ENCODE measurements at regions of chr5 and their contacts with region 1.

Region 1: GRCh38 chr5:53123702-53124101 is 14.1 kb upstream of the MOCS2 start:
- DNase-seq: peak; percentile 55
- ATAC-seq: no peak; the same call in 1 of the 2 replicates
- H3K4me3 ChIP-seq: no peak overlapping the region
- H3K27ac ChIP-seq: no peak overlapping the region
- H3K4me1 ChIP-seq: peaks cover 9% of the 10 kb centered on the region
- H3K27me3 ChIP-seq: no peaks in the 10 kb centered on the region
- CTCF ChIP-seq: peak; percentile 55

Region 2: GRCh38 chr5:52560366-52560765 is 563.3 kb before region 1 on chr5:
- CTCF ChIA-PET with region 1: no interaction called
- POLR2A ChIA-PET with region 1: no interaction called
- intact Hi-C with region 1: loop called (anchors 2 kb)
- DNase-seq: peak; percentile 56
- ATAC-seq: peak; percentile 76
- H3K4me3 ChIP-seq: no peak overlapping the region
- H3K27ac ChIP-seq: no peak overlapping the region
- H3K4me1 ChIP-seq: no peaks in the 10 kb centered on the region
- H3K27me3 ChIP-seq: peaks cover 42% of the 10 kb centered on the region
- CTCF ChIP-seq: peak; percentile 51

Region 3: DNA sequence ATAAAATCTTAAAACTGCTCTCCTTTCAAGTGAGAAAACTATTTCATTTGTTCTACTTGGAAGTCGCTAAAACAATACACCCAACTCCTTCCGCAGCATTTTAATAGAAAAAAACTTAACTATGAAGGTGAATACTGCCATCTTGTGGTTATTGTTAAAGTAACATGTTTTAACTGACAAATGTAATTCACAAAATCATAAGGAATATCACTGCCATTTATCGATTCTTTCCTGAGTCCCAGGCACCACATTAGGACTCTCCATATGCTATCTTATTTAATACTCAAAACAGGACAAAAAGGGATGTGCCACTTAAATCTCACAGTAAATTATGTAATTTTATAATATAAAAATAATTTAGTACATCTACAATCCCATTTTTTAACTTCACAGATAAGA is 466.5 kb before region 1 on chr5:
- CTCF ChIA-PET with region 1: no interaction called
- POLR2A ChIA-PET with region 1: no interaction called
- intact Hi-C with region 1: loop called (anchors 5 kb)
- DNase-seq: peak; percentile 63
- ATAC-seq: peak; percentile 35
- H3K4me3 ChIP-seq: no peak overlapping the region
- H3K27ac ChIP-seq: no peak overlapping the region
- H3K4me1 ChIP-seq: no peaks in the 10 kb centered on the region
- H3K27me3 ChIP-seq: peaks cover 40% of the 10 kb centered on the region
- CTCF ChIP-seq: peak; percentile 66

Region 4: DNA sequence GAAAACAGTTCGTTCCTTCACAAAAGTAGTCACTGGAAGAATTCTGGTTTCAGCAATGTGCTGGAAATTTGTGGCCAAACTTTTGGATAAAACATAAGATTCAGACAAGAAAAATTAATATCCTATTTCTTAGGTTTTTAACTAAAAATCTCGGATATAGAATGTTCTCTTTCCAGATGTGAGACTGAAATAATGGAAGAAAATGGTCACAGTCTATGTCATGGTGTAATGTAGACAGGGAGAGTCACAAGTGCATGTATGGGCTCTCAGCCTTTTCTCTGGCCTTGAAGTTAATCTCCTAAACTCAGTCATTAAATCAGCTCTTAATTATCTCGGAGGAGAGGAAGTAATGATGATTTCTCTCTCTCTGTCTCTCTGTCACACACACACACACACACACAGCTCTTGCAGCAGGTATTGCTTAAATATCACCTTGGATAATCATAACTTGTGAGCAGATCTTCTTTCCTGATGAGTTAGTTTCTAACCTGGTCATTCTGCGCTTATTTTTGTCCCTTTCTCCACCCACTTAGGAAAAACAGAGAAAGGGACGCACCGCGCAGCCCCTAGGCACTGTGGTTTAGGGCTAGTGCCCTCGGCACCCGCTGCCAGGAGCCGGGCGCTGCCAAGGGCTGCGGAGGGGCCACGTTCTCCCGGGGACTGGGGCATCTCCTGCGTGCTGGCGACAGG is 135.2 kb before region 1 on chr5:
- CTCF ChIA-PET with region 1: no interaction called
- POLR2A ChIA-PET with region 1: no interaction called
- intact Hi-C with region 1: no loop called
- DNase-seq: peak; percentile 37
- ATAC-seq: peak; percentile 1; the same call in 1 of the 2 replicates
- H3K4me3 ChIP-seq: peak overlapping the region; percentile 89
- H3K27ac ChIP-seq: peak overlapping the region; percentile 92
- H3K4me1 ChIP-seq: peaks cover 66% of the 10 kb centered on the region
- H3K27me3 ChIP-seq: no peaks in the 10 kb centered on the region
- CTCF ChIP-seq: no peak

Region 5: DNA sequence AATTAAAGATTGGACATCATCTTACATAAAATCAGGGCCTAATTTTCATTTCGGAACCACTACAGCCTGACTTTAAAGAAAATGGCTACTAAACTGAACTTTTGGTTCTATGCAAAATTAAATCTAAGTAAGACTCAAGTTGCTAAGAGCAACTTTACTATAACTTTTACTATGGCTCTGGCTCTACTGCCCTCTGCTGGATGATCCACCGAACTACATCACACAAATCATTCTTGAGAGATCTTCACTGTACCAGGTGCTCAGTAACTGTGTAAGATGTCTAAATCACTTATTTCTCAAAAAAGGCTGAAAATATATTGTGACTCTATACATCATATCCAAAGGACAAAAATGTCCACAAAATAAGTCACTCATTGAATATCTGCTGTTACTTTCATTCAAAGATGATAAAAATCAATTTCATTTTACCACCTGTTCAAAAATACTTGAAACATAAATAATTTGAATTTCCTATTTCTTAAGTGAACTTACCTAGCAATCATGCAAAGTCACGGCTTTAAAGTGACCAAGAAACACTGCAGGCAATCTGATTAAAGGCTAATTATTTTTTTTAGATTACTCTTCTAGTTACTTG is 27.7 kb before region 1 on chr5:
- CTCF ChIA-PET with region 1: no interaction called
- POLR2A ChIA-PET with region 1: no interaction called
- intact Hi-C with region 1: no loop called
- DNase-seq: peak; percentile 80
- ATAC-seq: peak; percentile 41
- H3K4me3 ChIP-seq: no peak overlapping the region
- H3K27ac ChIP-seq: no peak overlapping the region
- H3K4me1 ChIP-seq: peaks cover 8% of the 10 kb centered on the region; the same call in 1 of the 2 replicates
- H3K27me3 ChIP-seq: no peaks in the 10 kb centered on the region
- CTCF ChIP-seq: peak; percentile 87

Region 6: DNA sequence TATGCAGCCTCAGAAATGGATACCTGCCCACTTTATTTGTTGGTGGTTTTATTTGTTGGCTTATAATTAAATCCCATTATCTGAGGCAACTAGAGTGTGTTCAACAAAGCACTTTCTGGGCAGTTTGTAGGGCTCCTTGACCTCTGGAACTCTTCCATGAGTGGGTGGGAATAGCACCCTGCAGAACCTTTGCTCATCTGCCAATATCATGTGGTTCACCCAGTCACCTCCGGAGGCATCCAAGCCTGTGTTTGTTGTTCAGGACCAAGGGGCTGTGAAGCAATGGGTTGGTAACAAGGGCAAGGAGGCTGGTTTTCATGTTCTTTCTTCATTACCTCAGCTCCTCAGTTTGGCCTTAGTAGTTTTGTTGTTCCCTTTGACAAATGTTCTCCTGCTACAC is 750.7 kb after region 1 on chr5:
- CTCF ChIA-PET with region 1: no interaction called
- POLR2A ChIA-PET with region 1: no interaction called
- intact Hi-C with region 1: loop called (anchors 10 kb)
- DNase-seq: peak; percentile 21
- ATAC-seq: no peak
- H3K4me3 ChIP-seq: no peak overlapping the region
- H3K27ac ChIP-seq: no peak overlapping the region
- H3K4me1 ChIP-seq: no peaks in the 10 kb centered on the region
- H3K27me3 ChIP-seq: no peaks in the 10 kb centered on the region
- CTCF ChIP-seq: 0 out of 2 replicates have a peak, but pooled peaks have one; percentile 10

Region 7: GRCh38 chr5:54229041-54229780 is 1105.5 kb after region 1 on chr5:
- CTCF ChIA-PET with region 1: no interaction called
- POLR2A ChIA-PET with region 1: no interaction called
- intact Hi-C with region 1: loop called (anchors 1 kb)
- DNase-seq: peak; percentile 64
- ATAC-seq: peak; percentile 63
- H3K4me3 ChIP-seq: no peak overlapping the region
- H3K27ac ChIP-seq: no peak overlapping the region
- H3K4me1 ChIP-seq: no peaks in the 10 kb centered on the region
- H3K27me3 ChIP-seq: no peaks in the 10 kb centered on the region
- CTCF ChIP-seq: peak; percentile 79